WTC11 (cell line): ENCODE measurements at regions of chr15 and their contacts with region 1.

Region 1: DNA sequence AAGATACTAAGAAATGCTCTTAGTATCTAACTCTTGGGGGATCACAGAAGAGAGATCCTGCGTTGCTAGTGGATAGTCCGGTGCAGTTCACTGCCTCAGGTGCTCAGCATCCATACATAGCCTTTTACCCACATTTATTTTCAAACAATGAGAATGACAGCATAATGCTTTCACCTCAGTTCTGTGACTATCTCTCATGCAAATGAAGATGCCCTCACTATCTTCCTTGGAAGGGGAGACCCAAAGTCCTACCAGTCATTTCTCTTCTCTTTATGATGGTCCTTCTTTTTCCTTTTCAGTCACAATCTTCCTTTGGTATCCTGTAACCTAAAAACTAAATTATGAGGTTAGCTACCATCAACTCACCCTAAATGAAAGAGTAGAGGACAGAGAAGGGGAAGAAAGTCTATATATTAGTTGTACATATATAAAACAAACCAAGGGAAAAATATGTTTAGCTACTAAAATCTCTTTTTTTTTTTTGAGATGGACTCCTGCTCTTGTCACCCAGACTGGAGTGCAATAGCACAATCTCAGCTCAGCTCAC is 30.9 kb upstream of the SLC28A2 start:
- DNase-seq: no peak
- ATAC-seq: no peak
- H3K4me3 Mint-ChIP-seq: no peak overlapping the region
- H3K27ac Mint-ChIP-seq: no peak overlapping the region
- H3K4me1 Mint-ChIP-seq: no peaks in the 10 kb centered on the region
- H3K27me3 Mint-ChIP-seq: peaks cover 6% of the 10 kb centered on the region; the same call in 1 of the 2 replicates
- CTCF ChIP-seq: no peak

Region 2: GRCh38 chr15:45126535-45127158 is 94.5 kb before region 1 on chr15:
- CTCF ChIA-PET with region 1: no interaction called
- POLR2A ChIA-PET with region 1: no interaction called
- DNase-seq: no peak
- ATAC-seq: no peak
- H3K4me3 Mint-ChIP-seq: no peak overlapping the region
- H3K27ac Mint-ChIP-seq: no peak overlapping the region
- H3K4me1 Mint-ChIP-seq: peaks cover 5% of the 10 kb centered on the region
- H3K27me3 Mint-ChIP-seq: peaks cover 99% of the 10 kb centered on the region
- CTCF ChIP-seq: no peak

Region 3: GRCh38 chr15:45205192-45205591 is 15.9 kb before region 1 on chr15:
- CTCF ChIA-PET with region 1: interaction called, 15 read pairs
- POLR2A ChIA-PET with region 1: no interaction called
- DNase-seq: peak; percentile 77
- ATAC-seq: peak; percentile 52
- H3K4me3 Mint-ChIP-seq: no peak overlapping the region
- H3K27ac Mint-ChIP-seq: no peak overlapping the region
- H3K4me1 Mint-ChIP-seq: no peaks in the 10 kb centered on the region
- H3K27me3 Mint-ChIP-seq: peaks cover 19% of the 10 kb centered on the region
- CTCF ChIP-seq: peak; percentile 65

Region 4: DNA sequence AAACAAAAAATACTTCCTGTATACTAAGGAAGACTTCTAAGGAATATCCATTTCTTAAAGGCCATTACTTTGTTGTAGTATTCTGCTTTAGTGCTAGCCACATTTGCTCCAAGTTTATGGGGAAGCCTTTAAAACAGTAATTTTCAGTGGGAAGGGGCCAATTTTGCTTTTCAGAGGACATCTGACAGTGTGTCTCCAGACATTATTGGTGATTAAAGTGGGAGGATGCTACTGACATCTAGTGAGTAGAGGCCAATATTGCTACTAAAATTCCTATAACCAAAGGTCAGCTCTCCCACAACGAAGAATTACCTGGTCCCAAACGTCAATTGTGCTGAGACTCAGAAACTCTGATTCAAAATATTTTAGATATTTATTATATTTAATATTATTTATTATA is 55.7 kb after region 1 on chr15:
- CTCF ChIA-PET with region 1: no interaction called
- POLR2A ChIA-PET with region 1: no interaction called
- DNase-seq: no peak
- ATAC-seq: no peak
- H3K4me3 Mint-ChIP-seq: no peak overlapping the region
- H3K27ac Mint-ChIP-seq: no peak overlapping the region
- H3K4me1 Mint-ChIP-seq: 0 out of 2 replicates have a peak, but pooled peaks cover 3% of the 10 kb centered on the region
- H3K27me3 Mint-ChIP-seq: peaks cover 41% of the 10 kb centered on the region
- CTCF ChIP-seq: no peak